K562 (cell line): ENCODE measurements at regions of chr3 and their contacts with region 1.

Region 1: DNA sequence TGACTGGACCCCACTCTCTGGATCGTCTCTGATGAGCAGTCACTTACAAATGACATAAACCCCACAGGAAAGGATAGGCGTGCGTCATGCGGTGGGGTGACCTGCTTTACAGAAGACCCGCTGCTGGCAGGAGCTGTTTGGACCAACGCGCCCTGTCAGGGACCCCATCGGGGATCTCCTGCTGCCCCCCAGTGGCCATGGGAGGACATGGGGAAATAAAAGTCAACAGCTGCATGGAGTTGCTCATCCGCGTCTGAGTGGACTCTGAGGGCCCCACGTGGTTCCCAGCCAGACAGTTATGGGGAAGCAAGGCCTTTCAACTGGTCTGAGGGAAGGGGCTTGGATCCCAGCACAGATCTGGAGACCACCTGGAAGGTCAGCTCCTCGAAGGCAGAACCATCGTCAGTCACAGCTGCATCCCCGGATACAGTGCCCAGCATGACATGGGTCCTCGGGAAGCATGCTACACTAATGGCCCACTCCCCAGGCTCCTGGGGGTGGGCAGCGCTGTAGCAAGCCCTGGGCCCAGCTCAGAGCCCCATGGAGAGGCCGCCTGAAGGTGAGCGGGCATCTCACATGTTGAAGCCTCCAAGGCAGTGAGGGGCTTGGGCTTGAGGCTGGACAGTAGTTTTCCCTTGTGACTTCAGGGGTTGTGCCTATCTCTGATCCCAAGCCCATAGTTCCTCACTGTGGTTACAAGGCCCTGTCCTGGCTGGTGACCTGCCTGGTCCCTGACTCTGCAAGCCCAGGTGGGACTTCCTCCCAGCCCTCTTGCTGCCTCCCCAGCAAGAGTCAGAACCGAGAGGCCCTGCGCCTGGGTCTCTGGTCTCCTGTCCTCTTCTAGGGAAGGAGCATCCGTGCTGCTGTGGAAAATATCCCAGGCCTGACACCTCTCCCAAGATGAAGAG is 32.3 kb downstream of the PTH1R start:
- DNase-seq: peak; percentile 90 to 93 (median 90)
- ATAC-seq: peak; percentile 95
- H3K4me3 ChIP-seq: no peak overlapping the region
- H3K27ac ChIP-seq: no peak overlapping the region
- H3K4me1 ChIP-seq: peaks cover 0 to 22% of the 10 kb centered on the region in 2 experiments; a peak in 3 of 5 replicates
- H3K27me3 ChIP-seq: peaks cover 0 to 6% of the 10 kb centered on the region in 2 experiments; a peak in 2 of 5 replicates
- CTCF ChIP-seq: peak; percentile 96 to 98 (median 98)
- EP300 ChIP-seq: no peak
- POLR2A ChIP-seq: peak; percentile 10; the same call in 1 of the 2 replicates
- RAD21 ChIP-seq: peak; percentile 90 to 95

Region 2: DNA sequence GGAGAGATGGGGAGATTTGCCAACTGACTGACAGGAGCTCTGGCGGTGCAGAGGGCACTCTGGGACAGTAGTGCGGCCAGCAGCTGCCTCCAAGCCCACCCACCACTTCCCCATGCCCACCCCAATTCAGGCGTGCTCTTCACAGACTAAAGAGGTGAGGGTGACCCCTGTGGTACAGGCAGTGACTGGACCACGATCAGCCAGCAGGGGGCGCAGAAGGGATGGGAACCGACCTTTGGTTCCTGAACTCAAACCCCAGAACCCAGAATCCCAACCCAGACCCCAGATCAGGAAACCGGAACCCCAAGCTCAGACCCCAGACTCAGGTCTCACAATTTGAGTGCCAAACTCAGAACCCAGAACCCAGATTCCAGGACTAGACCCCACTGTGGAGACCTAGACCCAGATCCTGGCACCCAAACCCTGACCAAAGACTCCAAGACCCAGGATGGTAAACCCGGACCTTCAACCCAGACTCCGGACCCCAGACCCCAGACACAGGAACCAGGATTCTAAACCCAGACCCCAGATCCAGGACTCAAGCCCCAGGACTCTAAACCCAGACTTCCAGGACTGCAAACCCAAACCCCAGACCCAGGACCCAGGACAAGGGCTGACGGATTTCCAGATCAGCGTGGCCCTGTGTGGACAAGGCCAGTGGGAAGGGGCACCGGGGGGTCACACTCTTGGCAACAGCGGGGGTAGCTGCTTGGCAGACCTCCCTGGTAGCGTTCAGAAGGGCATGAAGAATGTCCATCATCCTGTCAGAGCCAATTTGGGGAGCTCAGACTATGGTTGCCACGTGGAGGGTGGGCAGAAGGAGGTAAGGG is 42.9 kb before region 1 on chr3:
- CTCF ChIA-PET with region 1: interaction called, 16 read pairs
- POLR2A ChIA-PET with region 1: no interaction called
- in situ Hi-C with region 1: no loop called
- intact Hi-C with region 1: loop called (anchors 1 kb)
- DNase-seq: peak; percentile 80 to 91 (median 86)
- ATAC-seq: peak; percentile 86
- H3K4me3 ChIP-seq: no peak overlapping the region
- H3K27ac ChIP-seq: no peak overlapping the region
- H3K4me1 ChIP-seq: peaks cover 0 to 15% of the 10 kb centered on the region in 2 experiments; a peak in 2 of 5 replicates
- H3K27me3 ChIP-seq: peaks cover 8 to 50% of the 10 kb centered on the region in 2 experiments; a peak in 4 of 5 replicates
- CTCF ChIP-seq: peak; percentile 95 to 96 (median 96)
- EP300 ChIP-seq: no peak
- POLR2A ChIP-seq: no peak
- RAD21 ChIP-seq: peak; percentile 76 to 89

Region 3: GRCh38 chr3:47365213-47366153 is 455.7 kb after region 1 on chr3:
- CTCF ChIA-PET with region 1: no interaction called
- POLR2A ChIA-PET with region 1: no interaction called
- in situ Hi-C with region 1: no loop called
- intact Hi-C with region 1: loop called (anchors 2 kb)
- DNase-seq: no peak
- ATAC-seq: no peak
- H3K4me3 ChIP-seq: no peak overlapping the region
- H3K27ac ChIP-seq: no peak overlapping the region
- H3K4me1 ChIP-seq: no peaks in the 10 kb centered on the region
- H3K27me3 ChIP-seq: no peaks in the 10 kb centered on the region
- CTCF ChIP-seq: no peak
- EP300 ChIP-seq: no peak
- POLR2A ChIP-seq: no peak
- RAD21 ChIP-seq: no peak